ENCODE measurements at regions of chr16 and their contacts with region 1.

Region 1: DNA sequence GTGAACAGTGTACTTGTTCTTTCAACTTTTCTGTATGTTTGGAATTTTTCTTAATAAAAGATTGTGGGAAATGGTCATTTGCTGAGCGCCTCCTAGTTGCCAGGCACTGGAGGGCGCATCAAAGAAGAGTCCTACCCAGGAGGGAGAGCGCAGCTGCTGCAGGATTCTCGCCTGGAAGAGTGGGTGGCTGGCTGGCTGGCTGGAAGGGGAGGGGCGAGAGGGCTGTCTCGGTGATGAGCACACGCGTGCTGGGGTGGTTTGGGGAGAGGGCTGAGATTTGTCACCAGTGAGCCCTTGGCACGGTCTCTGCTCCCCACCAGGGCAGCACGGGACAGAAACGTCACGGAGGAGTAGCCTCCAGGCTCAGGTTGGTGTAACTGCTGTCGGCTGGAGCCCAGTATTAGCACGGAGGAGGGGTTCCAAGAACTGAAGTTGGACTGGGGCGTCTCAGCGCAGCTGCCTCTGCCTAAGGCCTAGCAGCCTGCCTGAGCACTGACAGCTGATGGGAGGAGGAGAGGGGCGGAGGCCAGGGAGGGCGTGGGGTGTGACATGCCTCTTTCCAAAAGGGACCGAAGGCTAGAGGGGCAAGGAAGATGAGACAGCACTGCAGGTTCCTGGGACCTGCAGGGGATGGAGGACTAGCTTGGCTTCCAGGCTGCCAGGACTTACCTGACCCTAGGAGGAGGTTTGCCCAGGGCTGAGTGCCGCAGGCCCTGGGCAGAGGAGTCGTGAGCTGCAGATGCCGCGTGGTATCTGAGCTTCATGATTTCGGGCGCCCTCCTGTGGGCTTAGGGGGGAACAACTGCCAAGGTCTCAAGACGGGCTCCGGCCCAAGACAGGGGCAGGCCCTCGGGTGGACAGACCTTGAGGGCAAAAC is 5.7 kb downstream of the LDHD start:
- DNase-seq: peak; percentile 80
- ATAC-seq: peak; percentile 65
- H3K4me3 ChIP-seq: peak overlapping the region; percentile 32 to 71 (median 48)
- H3K27ac ChIP-seq: peak overlapping the region; percentile 15
- H3K4me1 ChIP-seq: peaks cover 53% of the 10 kb centered on the region
- H3K27me3 ChIP-seq: no peaks in the 10 kb centered on the region
- CTCF ChIP-seq: peak; percentile 98
- EP300 ChIP-seq: no peak
- POLR2A ChIP-seq: peak; percentile 31 to 42; a peak in 2 of 4 replicates
- RAD21 ChIP-seq: peak; percentile 95

Region 2: DNA sequence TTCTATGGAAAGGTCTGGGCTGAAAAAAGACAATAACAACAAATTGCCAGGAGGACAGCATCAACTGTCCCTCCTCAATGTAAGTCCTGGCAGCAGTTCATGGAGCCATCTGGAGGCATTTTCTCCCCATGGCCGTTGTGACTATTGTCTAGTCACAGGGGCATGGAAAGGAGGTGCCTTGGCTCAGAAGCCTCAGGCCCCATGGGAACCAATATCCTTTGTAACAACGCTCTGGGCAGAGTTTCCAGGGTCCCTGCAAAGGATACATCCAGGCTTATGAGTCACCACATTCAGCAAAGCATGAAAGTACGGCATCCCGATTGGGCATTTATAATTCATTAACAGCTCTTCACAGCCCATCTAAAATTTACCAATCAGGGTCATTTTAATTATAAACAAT is 589.2 kb before region 1 on chr16:
- CTCF ChIA-PET with region 1: no interaction called
- POLR2A ChIA-PET with region 1: no interaction called
- in situ Hi-C with region 1: no loop called
- intact Hi-C with region 1: no loop called
- DNase-seq: no peak
- ATAC-seq: no peak
- H3K4me3 ChIP-seq: no peak overlapping the region
- H3K27ac ChIP-seq: no peak overlapping the region
- H3K4me1 ChIP-seq: no peaks in the 10 kb centered on the region
- H3K27me3 ChIP-seq: no peaks in the 10 kb centered on the region
- CTCF ChIP-seq: no peak
- EP300 ChIP-seq: no peak
- POLR2A ChIP-seq: no peak
- RAD21 ChIP-seq: no peak

Region 3: DNA sequence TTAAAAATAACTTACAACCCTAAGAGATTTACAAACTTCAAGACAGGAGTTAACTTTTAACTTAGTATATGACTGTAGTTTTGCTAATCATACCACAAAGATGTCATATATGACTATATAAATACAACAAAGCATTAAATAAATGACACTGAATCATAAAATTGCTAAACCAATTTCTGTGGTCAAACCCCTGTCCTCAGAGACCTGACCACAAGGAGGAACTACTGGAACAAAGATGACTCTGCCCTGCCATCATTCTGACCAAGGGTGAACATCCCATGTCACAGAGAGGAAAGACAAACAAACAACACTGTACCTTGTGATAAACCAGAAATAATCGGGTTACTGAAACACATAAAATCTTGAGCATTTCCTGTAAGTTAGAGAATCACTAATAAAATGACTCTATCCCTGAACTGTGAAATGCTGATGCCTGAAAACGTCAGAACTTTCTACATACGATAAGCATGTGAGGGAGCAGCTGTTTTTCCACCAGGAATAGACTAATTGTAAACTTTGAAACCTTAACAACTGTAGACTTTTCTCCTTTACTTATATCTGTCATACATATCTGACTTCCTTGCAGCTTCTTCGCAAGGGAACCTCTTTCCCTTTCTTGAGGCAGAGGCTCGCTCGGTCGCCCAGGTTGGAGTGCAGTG is 173.8 kb before region 1 on chr16:
- CTCF ChIA-PET with region 1: no interaction called
- POLR2A ChIA-PET with region 1: no interaction called
- in situ Hi-C with region 1: no loop called
- intact Hi-C with region 1: loop called (anchors 1 kb)
- DNase-seq: no peak
- ATAC-seq: peak; percentile 73
- H3K4me3 ChIP-seq: no peak overlapping the region
- H3K27ac ChIP-seq: no peak overlapping the region
- H3K4me1 ChIP-seq: no peaks in the 10 kb centered on the region
- H3K27me3 ChIP-seq: no peaks in the 10 kb centered on the region
- CTCF ChIP-seq: peak; percentile 44
- EP300 ChIP-seq: no peak
- POLR2A ChIP-seq: no peak
- RAD21 ChIP-seq: no peak

Region 4: GRCh38 chr16:74984535-74985296 is 126.2 kb before region 1 on chr16 and contains the start of gene WDR59:
- CTCF ChIA-PET with region 1: no interaction called
- POLR2A ChIA-PET with region 1: interaction called, 14 read pairs
- in situ Hi-C with region 1: no loop called
- intact Hi-C with region 1: no loop called
- DNase-seq: peak; percentile 100
- ATAC-seq: peak; percentile 99
- H3K4me3 ChIP-seq: peak within 1 kb of the TSS; percentile 85 to 99 (median 89)
- H3K27ac ChIP-seq: peak within 1 kb of the TSS; percentile 75
- H3K4me1 ChIP-seq: peaks cover 69% of the 10 kb centered on the region
- H3K27me3 ChIP-seq: no peaks in the 10 kb centered on the region; a peak in 1 of 5 replicates
- CTCF ChIP-seq: peak; percentile 24; the same call in 1 of the 2 replicates
- EP300 ChIP-seq: 0 out of 4 replicates have a peak, but pooled peaks have one; percentile 16 to 63
- POLR2A ChIP-seq: peak; percentile 86 to 90
- RAD21 ChIP-seq: peak; percentile 56; the same call in 1 of the 2 replicates
- total RNA-seq, gene WDR59: 59.6 and 65.2 TPM in 2 replicates

Region 5: DNA sequence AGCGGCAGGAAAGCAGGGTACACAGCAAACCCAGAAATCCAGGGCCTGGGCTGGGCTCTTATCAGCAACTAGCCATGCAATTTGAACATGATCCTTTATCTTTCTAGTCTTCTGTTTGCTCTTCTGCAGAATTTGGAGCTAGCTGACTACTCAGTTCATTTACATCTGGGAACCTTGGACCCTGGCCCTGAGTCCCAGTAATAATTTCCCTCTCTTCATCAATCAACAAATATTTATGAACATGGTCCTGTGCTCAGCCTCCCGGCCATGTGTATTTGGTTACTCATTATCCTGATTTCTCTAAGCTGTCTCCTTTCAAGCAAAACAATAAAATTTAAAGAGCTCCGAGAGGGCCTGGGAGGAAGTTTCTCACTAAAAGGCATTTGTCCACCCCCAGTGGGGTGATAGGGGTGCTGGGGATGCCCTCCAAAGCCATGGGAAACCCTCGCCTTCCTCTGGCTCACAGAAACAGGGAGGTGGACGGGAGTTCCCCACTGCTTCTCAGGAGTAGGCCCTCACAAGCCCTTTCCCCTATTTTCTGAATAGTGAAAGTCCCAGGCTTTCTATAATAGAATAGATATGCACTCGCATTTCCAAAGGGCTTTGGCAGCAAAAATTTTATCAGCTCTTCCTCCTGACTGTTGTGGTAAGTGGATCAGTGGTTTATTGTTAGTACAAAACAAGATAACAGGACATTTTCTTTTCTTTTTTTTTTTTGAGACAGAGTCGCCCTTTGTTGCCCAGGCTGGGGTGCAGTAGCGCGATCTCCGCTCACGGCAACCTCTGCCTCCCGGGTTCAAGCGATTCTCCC is 119.1 kb before region 1 on chr16:
- CTCF ChIA-PET with region 1: interaction called, 3 read pairs
- POLR2A ChIA-PET with region 1: interaction called, 30 read pairs
- in situ Hi-C with region 1: loop called (anchors 10 kb)
- intact Hi-C with region 1: no loop called
- DNase-seq: peak; percentile 100
- ATAC-seq: peak; percentile 93
- H3K4me3 ChIP-seq: peak overlapping the region; percentile 53 to 66 (median 61)
- H3K27ac ChIP-seq: peak overlapping the region; percentile 98
- H3K4me1 ChIP-seq: peaks cover 98% of the 10 kb centered on the region
- H3K27me3 ChIP-seq: no peaks in the 10 kb centered on the region
- CTCF ChIP-seq: no peak
- EP300 ChIP-seq: peak; percentile 54 to 97; a peak in 3 of 4 replicates
- POLR2A ChIP-seq: peak; percentile 46 to 50; a peak in 3 of 4 replicates
- RAD21 ChIP-seq: 0 out of 2 replicates have a peak, but pooled peaks have one; percentile 19

Region 6: DNA sequence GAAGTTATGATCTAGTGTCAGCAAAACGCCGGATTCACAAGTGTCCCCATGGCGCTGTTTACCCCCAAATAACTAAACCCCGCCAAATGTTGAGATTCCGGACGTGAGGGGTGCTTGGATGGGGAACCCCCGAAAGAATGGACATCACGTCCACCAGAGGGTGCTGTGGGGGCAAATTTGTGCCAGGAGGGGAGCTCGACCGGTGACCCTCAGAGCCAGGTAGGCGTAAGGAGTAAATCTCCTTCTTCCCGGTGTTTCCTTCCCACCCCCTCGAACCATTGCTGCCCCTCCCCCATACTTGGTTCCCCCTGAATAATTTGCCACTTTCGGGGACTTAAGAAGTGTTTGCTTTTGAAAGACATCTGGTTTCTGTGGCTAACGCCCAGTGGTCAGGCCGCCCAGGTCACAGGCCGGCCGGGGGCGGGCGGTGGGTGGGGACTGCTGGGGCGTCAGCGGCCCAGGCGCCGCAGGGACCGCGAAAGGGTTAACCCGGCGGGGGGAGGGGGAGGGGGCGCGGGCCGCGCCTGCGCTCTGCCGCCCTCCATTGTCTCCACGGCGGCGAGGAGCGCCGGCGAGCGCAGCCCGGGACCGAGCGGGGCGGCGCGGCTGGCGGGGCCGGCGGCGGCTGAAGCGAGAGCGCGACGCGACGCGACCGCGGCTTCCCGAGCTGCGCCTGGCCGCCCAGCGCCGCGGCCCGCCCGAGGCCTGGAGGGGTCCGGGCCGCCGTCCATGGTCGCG is 112.2 kb before region 1 on chr16 and contains the start of gene ZNRF1:
- CTCF ChIA-PET with region 1: interaction called, 11 read pairs
- POLR2A ChIA-PET with region 1: interaction called, 30 read pairs
- in situ Hi-C with region 1: loop called (anchors 10 kb)
- intact Hi-C with region 1: loop called (anchors 1 kb)
- DNase-seq: peak; percentile 82
- ATAC-seq: peak; percentile 73
- H3K4me3 ChIP-seq: peak within 1 kb of the TSS; percentile 76 to 94 (median 80)
- H3K27ac ChIP-seq: peak within 1 kb of the TSS; percentile 91
- H3K4me1 ChIP-seq: peaks cover 75% of the 10 kb centered on the region
- H3K27me3 ChIP-seq: no peaks in the 10 kb centered on the region; a peak in 1 of 5 replicates
- CTCF ChIP-seq: peak; percentile 85
- EP300 ChIP-seq: peak in 1 of 2 experiments; percentile 43; a peak in 2 of 4 replicates
- POLR2A ChIP-seq: peak; percentile 50 to 51; a peak in 2 of 4 replicates
- RAD21 ChIP-seq: peak; percentile 62
- total RNA-seq, gene ZNRF1: 32.3 and 43.9 TPM in 2 replicates

Region 7: DNA sequence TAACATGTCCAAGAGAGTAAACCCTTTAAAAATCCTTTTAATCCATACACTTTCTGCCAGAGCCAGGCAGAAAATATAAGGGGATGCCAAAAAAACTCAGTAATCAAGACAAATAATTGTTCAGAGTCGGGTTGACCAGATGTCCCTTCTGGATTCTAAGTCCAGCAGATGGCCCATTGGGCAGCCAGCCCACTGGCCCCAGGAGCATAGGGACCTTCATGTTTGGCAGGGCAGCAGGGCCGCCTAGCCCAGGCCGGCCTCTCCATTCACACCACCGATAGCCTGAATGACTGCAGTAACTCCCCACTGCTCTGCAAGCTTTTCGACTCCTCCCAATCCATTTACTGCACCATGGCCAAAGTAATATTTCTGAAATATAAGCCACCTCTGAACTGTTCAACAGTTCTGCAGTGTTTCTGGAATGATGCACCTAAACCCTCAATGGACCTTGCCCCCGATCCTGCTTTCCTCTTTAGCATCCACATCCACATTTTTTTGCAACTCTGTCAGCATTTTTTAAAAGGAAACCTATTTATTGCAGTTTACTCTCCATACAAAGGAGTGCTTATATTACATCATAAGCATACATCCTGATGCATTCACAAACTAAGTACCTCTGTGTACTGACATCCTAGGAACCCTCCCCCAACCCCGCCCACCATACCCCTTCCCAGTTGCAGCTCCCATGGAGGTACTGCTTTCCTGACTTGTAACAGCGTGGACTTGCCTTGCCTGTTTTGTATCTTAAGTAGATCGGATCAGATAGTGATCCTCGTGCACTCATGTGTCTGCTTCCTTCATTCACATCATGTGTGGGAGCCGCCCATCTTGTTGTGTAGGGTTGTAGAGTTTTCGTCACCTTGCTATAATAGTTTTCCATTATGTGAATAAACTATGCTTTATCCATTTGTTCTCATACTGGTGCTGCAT is 40.6 kb before region 1 on chr16:
- CTCF ChIA-PET with region 1: no interaction called
- POLR2A ChIA-PET with region 1: interaction called, 5 read pairs
- in situ Hi-C with region 1: no loop called
- intact Hi-C with region 1: loop called (anchors 2 kb)
- DNase-seq: peak; percentile 98
- ATAC-seq: peak; percentile 92
- H3K4me3 ChIP-seq: peak overlapping the region in 2 of 3 experiments; percentile 41 to 50; a peak in 3 of 6 replicates
- H3K27ac ChIP-seq: peak overlapping the region; percentile 79
- H3K4me1 ChIP-seq: peaks cover 75% of the 10 kb centered on the region
- H3K27me3 ChIP-seq: no peaks in the 10 kb centered on the region
- CTCF ChIP-seq: no peak
- EP300 ChIP-seq: peak; percentile 77 to 79; a peak in 3 of 4 replicates
- POLR2A ChIP-seq: no peak; a peak in 1 of 4 replicates
- RAD21 ChIP-seq: no peak

Measured in HepG2 (cell line).